Mammary epithelial cell (primary cell): ENCODE measurements at regions of chr19 and their contacts with region 1.

Region 1: GRCh38 chr19:7197760-7198696 is 96.2 kb downstream of the INSR start:
- DNase-seq: peak; percentile 92
- H3K4me3 ChIP-seq: peak overlapping the region; percentile 56 to 74 (median 60)
- H3K27ac ChIP-seq: no peak overlapping the region
- H3K4me1 ChIP-seq: peaks cover 10% of the 10 kb centered on the region
- H3K27me3 ChIP-seq: no peaks in the 10 kb centered on the region
- CTCF ChIP-seq: no peak

Region 2: GRCh38 chr19:7063339-7063738 is 134.7 kb before region 1 on chr19:
- CTCF ChIA-PET with region 1: no interaction called
- dilution Hi-C with region 1: no loop called
- in situ Hi-C with region 1: no loop called
- intact Hi-C with region 1: no loop called
- DNase-seq: no peak
- H3K4me3 ChIP-seq: no peak overlapping the region
- H3K27ac ChIP-seq: no peak overlapping the region
- H3K4me1 ChIP-seq: no peaks in the 10 kb centered on the region
- H3K27me3 ChIP-seq: no peaks in the 10 kb centered on the region
- CTCF ChIP-seq: no peak

Region 3: DNA sequence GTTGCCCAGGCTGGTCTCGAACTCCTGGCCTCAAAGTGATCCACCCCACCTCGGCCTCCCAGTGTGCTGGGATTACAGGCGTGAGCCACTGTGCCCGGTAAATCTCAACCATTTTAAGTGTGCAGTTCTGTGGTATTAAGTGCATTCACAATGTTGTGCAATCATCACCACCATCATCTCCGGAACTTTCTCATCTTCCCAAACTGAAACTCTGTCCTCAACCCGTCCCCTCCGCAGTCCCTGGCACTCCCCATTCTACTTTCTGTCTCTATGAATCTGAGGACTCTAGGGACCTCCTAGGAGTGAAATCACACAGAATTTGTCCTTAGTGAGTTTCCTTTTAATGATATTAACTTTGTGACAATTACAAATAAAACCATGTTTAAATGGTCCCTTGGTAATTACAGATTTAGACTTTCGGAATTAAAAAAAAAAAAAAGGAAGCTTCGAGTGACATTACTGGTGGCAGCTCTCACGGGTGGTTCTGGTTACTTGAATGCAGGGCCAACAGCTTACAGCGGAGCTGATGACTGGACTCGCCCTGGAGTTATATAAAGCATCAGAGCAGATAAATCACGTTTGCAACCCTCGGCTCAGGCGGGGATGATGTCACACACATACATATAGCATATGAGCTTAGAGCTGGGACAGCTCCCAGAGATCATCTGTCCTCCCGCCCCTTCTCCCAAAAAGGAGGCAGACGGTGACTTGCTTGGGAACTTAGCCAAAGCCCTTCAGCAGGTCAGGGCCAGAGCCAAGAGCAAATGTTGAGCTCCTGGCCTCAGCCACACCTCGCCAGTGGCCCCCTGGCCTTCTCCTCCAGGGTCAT is 38.7 kb before region 1 on chr19:
- CTCF ChIA-PET with region 1: interaction called, 10 read pairs
- dilution Hi-C with region 1: no loop called
- in situ Hi-C with region 1: no loop called
- intact Hi-C with region 1: no loop called
- DNase-seq: no peak
- H3K4me3 ChIP-seq: no peak overlapping the region
- H3K27ac ChIP-seq: no peak overlapping the region
- H3K4me1 ChIP-seq: no peaks in the 10 kb centered on the region
- H3K27me3 ChIP-seq: no peaks in the 10 kb centered on the region
- CTCF ChIP-seq: no peak

Region 4: DNA sequence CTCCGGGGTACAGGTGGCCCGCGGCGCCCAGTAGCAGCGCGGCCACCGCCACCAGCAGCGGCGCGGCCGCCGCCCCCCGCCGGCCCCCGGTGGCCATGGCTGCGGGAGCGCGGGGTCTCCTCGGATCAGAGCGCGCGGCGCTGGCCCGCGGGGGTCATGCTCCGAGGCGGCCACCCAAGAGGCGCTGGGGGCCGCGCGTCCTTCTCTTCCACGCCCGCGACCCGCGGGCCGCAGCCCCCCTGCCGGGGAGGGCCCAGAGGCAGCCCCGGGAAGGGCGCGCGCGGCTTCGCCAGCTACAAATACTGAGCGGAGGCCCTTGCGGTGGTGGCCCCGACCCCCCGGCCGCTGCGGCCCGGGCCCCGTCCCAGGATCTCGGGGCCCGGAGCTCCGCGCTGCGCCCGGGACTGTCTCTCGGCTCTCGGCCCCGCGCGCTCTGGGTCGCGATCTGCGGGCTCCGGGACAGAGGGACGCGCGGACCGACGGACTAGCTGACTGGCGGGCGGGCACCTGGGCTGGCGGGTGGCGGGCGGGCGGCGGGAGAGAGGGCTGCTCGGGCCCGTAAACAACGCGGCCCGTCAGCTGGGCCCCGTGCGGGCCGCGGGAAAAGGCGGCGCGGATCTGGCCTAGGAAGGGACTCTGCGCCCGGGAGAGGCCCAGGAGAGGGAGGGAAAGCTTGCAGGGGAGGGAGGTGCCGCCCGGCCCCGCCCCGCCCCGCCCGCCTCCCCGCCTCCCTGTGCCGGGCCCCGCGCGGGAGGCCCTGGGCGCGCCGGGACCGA is 96.0 kb after region 1 on chr19 and contains the start of gene INSR:
- CTCF ChIA-PET with region 1: no interaction called
- dilution Hi-C with region 1: no loop called
- in situ Hi-C with region 1: loop called (anchors 10 kb)
- intact Hi-C with region 1: loop called (anchors 1 kb)
- DNase-seq: peak; percentile 91
- H3K4me3 ChIP-seq: peak within 1 kb of the TSS; percentile 45 to 57 (median 51)
- H3K27ac ChIP-seq: no peak within 1 kb of the TSS
- H3K4me1 ChIP-seq: no peaks in the 10 kb centered on the region
- H3K27me3 ChIP-seq: peaks cover 7% of the 10 kb centered on the region
- CTCF ChIP-seq: no peak
- total RNA-seq, gene INSR: 9.3 to 20.7 TPM